Prostate gland (tissue), 2 donors: ENCODE measurements at regions of chr1 and their contacts with region 1.

Region 1: GRCh38 chr1:234997201-234997895 is 131.3 kb downstream of the TOMM20 start:
- DNase-seq: peak; percentile 98
- H3K4me3 ChIP-seq: no peak overlapping the region
- H3K27ac ChIP-seq: peak overlapping the region; percentile 86 to 89
- H3K4me1 ChIP-seq: peaks cover 12% of the 10 kb centered on the region
- H3K27me3 ChIP-seq: no peaks in the 10 kb centered on the region
- CTCF ChIP-seq: peak in 1 of 4 experiments; percentile 17
- POLR2A ChIP-seq: peak; percentile 38

Region 2: GRCh38 chr1:235045034-235045720 is 47.8 kb after region 1 on chr1:
- intact Hi-C with region 1: loop called (anchors 5 kb)
- DNase-seq: no peak
- H3K4me3 ChIP-seq: no peak overlapping the region
- H3K27ac ChIP-seq: no peak overlapping the region
- H3K4me1 ChIP-seq: no peaks in the 10 kb centered on the region
- H3K27me3 ChIP-seq: no peaks in the 10 kb centered on the region
- CTCF ChIP-seq: no peak
- POLR2A ChIP-seq: no peak

Region 3: GRCh38 chr1:235075188-235075926 is 78.0 kb after region 1 on chr1:
- intact Hi-C with region 1: loop called (anchors 5 kb)
- DNase-seq: peak; percentile 42
- H3K4me3 ChIP-seq: no peak overlapping the region
- H3K27ac ChIP-seq: peak overlapping the region; percentile 85 to 90
- H3K4me1 ChIP-seq: peaks cover 25% of the 10 kb centered on the region
- H3K27me3 ChIP-seq: no peaks in the 10 kb centered on the region
- CTCF ChIP-seq: no peak
- POLR2A ChIP-seq: no peak

Region 4: DNA sequence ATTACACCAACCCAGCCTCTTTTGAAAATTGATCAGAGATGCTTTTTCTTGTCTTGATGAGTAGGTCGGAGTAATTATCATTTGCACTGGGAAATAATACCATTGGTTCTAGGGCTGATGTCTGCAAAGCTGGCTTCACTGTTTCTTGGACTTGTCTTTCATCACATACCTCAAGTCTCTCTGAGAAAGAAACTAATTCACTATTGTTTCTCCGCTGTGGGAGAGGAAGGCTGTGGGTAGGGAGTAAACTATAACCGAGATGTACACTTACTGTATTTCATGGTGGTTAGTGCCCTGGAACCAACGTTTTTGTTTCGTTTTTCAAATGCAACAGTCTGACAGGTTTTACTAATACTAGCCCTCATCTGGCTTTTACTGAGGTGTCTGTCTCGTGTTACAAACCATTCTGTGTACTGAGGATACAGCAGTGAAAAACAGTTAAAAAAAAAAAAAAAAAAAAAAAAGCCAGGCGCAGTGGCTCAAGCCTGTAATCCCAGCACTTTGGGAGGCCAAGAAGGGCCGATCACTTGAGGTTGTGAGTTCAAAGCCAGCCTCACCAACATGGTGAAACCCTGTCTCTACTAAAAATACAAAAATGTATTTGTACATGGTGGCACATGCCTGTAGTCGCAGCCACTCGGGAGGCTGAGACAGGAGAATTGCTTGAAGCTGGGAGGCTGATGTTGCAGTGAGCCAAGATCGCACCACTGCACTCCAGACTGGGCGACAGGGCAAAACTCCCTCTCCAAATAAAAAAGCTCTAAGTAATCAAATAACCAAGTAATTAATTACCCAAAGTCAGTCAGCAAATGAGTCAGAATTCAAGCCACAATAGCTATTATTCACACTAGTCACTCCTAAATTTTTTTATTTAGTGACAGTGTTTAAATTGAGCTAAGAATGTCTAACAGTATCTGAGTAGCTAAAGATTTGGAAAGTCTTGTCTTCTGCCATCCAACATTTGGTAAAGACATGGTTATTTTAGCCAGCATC is 108.0 kb after region 1 on chr1:
- intact Hi-C with region 1: no loop called
- DNase-seq: no peak
- H3K4me3 ChIP-seq: no peak overlapping the region
- H3K27ac ChIP-seq: no peak overlapping the region
- H3K4me1 ChIP-seq: no peaks in the 10 kb centered on the region
- H3K27me3 ChIP-seq: no peaks in the 10 kb centered on the region
- CTCF ChIP-seq: no peak
- POLR2A ChIP-seq: no peak